Ascending aorta (tissue), 2 donors: ENCODE measurements at regions of chr15 and their contacts with region 1.

Region 1: GRCh38 chr15:84929744-84930371 is 45.4 kb downstream of the SLC28A1 start:
- DNase-seq: no peak
- H3K4me3 ChIP-seq: no peak overlapping the region
- H3K27ac ChIP-seq: no peak overlapping the region
- H3K4me1 ChIP-seq: peaks cover 3 to 15% of the 10 kb centered on the region in 2 donors
- H3K27me3 ChIP-seq: no peaks in the 10 kb centered on the region
- CTCF ChIP-seq: no peak

Region 2: DNA sequence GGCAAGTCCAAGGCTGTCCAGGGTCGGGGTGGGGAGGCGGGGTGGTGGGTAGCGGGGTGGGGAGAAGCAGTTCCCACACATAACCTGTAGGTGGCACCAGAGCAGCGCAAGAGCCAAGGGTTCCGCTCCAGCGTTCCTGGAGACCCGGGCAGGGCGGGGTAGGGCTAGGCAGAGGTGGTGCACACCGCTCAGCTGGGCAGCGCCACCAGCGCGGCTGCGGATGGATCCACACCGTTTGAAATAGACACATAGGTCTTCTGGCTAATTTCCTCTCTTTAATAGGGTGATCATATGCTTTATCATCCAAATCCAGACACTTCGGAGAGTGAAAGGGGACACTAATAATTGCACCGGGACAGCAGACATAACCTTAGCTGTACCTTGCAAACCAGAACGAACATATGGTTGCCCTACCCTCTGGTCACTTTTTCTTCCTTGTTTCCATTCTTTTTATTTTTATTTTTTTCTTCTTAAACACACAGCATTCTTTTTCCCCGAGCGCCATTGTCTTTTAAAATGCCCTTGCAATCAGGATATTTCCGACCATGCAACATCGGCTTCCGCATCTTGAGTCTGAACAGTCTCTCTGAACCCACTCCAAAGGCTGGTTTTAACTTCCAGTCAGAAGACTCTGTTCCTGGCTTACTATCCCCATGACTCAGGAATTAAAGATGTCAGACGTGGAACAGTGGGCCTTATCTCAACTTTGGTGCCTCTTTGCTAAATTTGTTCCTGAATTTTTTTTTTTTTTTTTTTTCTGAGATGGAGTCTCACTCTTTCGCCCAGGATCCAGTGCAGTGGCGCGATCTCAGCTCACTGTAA is 341.6 kb before region 1 on chr15:
- intact Hi-C with region 1: loop called (anchors 2 kb)
- DNase-seq: peak; percentile 36 to 92
- H3K4me3 ChIP-seq: peak overlapping the region; percentile 45 to 56
- H3K27ac ChIP-seq: no peak overlapping the region
- H3K4me1 ChIP-seq: no peaks in the 10 kb centered on the region
- H3K27me3 ChIP-seq: no peaks in the 10 kb centered on the region
- CTCF ChIP-seq: peak; percentile 65 to 96 (median 96)

Region 3: DNA sequence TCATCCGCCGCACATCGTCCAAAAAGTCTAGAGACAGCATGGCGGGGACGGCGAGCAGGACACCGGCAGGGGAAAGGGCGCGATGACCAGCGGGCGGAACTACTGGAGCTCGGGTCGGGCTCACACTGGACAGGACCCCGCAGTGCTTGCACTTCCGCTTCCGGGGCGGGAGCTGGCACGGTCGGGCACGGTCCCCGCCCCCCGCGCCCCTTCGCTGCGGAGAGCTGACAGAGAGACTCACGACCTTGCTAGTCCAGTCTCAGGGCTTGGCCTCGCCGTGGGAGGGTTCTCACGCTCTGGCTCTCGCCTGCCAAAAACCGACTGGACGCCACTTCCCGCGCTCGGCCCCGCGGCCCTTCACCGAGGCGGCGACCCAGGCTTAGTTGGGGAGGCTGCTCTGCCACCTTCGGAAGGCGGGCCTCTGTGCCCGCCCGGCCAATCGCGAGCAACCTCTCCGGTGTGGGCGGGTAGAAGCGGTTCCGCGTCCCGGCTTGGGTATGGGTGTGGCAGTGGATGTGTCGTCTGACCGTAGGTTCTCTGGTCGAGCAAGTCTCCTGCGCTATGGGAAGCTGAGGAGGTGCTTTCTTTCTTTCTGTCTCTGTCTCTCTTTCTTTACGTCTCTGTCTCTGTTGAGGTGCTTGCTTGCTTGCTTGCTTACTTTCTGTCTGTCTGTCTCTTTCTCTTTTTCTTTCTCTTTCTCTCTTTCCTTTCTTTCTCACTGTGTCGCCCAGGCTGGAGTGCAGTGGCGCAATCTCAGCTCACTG is 213.6 kb before region 1 on chr15 and contains the start of gene SEC11A:
- intact Hi-C with region 1: loop called (anchors 2 kb)
- DNase-seq: peak; percentile 88 to 98
- H3K4me3 ChIP-seq: peak within 1 kb of the TSS; percentile 70 to 77
- H3K27ac ChIP-seq: peak within 1 kb of the TSS; percentile 88
- H3K4me1 ChIP-seq: peaks cover 3 to 10% of the 10 kb centered on the region in 2 donors
- H3K27me3 ChIP-seq: no peaks in the 10 kb centered on the region
- CTCF ChIP-seq: no peak
- total RNA-seq, gene SEC11A: 31.6 TPM

Region 4: DNA sequence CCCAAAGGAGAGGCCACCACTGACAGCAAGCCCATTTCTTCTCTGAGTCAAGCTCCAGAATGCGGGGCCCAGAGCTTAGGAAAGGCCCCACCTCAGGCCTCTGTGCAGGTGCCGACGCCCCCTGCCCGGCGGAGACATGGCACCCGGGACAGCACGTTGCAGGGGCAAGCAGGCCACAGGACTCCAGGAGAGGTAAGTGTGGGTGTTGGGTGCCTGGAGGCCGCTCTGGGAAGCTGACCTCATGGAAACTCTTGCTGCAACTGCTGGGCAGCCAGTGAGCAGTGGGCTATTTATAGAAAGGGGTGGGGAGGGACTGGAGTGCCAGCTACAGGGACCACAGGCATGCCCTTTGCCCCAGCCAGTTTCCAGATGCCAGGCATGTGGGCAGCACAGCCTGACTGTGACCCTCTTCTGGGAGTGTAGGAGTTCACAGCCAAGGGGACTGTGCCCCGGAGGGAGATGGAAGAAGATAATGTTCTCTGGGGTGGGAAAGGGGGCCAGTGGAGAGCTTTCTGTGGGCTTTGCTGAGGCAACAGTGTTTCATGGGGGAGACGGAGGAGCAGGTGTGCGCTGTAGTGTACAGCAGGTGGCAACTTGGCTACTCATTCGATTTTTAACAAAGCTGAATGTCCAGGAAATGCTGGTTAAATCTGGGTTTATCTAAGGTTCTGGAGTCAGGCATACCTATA is 89.0 kb before region 1 on chr15:
- intact Hi-C with region 1: loop called (anchors 5 kb)
- DNase-seq: peak; percentile 83 to 96
- H3K4me3 ChIP-seq: peak overlapping the region in 1 of 2 donors; percentile 9
- H3K27ac ChIP-seq: peak overlapping the region; percentile 97
- H3K4me1 ChIP-seq: peaks cover 16 to 46% of the 10 kb centered on the region in 2 donors
- H3K27me3 ChIP-seq: no peaks in the 10 kb centered on the region
- CTCF ChIP-seq: no peak

Region 5: DNA sequence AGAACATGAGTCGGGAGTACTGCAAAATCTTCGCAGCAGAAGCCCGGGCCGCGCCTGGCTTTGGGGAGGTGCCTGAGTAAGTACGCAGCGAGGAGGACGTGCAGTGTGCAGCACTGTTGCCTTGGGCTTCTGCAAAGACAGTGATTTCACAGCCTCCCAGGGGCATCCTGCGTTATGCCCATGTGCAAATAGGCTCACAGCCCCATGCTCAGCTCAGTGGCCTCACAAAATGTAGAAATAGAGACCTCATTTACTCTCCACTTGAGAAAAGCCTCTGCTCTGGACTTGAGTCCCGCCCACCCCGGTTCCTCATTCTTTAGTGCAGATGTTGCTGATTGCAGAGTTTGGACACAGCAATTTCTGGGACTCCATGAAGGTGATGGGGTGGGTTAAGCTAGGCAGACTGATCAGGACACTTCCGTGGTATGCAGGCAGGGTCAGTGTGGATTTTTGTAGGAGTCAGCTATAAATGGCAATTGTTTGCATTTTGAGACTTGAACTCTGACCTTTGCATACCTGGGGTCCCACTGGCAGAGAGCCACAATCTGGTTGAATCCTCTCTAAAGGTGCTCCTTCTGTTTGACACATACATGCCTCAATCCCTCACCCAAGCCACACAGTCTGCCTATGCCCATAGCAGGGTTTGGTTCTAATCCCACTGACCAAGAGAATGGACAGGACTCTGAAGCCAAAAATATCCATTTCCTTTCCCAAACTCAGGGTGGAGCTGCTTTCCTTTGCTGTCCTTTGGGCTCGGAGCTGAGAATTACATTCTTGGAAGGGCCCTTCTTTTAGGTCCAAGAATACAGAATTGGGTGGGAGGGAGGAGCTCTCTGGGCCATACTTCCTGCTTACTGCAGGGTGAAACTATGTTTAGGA is 66.1 kb before region 1 on chr15:
- intact Hi-C with region 1: loop called (anchors 1 kb)
- DNase-seq: peak in 1 of 2 donors; percentile 64
- H3K4me3 ChIP-seq: peak overlapping the region in 1 of 2 donors; percentile 17
- H3K27ac ChIP-seq: peak overlapping the region; percentile 4 to 44
- H3K4me1 ChIP-seq: peaks cover 6 to 16% of the 10 kb centered on the region in 2 donors
- H3K27me3 ChIP-seq: no peaks in the 10 kb centered on the region
- CTCF ChIP-seq: peak; percentile 29 to 66 (median 37)